CD8-positive, alpha-beta T cell (primary cell): ENCODE measurements at regions of chr1 and their contacts with region 1.

Region 1: GRCh38 chr1:235465066-235465465 is 39.2 kb downstream of the B3GALNT2 start:
- DNase-seq: no peak
- ATAC-seq: no peak
- H3K4me3 ChIP-seq: no peak overlapping the region
- H3K4me3 Mint-ChIP-seq: no peak overlapping the region
- H3K27ac ChIP-seq: no peak overlapping the region
- H3K27ac Mint-ChIP-seq: no peak overlapping the region
- H3K4me1 ChIP-seq: no peaks in the 10 kb centered on the region
- H3K4me1 Mint-ChIP-seq: peaks cover 12% of the 10 kb centered on the region
- H3K27me3 ChIP-seq: no peaks in the 10 kb centered on the region
- H3K27me3 Mint-ChIP-seq: no peaks in the 10 kb centered on the region
- CTCF ChIP-seq: no peak

Region 2: GRCh38 chr1:235430991-235431390 is 34.1 kb before region 1 on chr1:
- CTCF ChIA-PET with region 1: interaction called, 3 read pairs
- POLR2A ChIA-PET with region 1: no interaction called
- intact Hi-C with region 1: loop called in 1 of 2 experiments (anchors 1 kb)
- DNase-seq: no peak
- ATAC-seq: no peak
- H3K4me3 ChIP-seq: no peak overlapping the region
- H3K4me3 Mint-ChIP-seq: no peak overlapping the region
- H3K27ac ChIP-seq: no peak overlapping the region
- H3K27ac Mint-ChIP-seq: no peak overlapping the region
- H3K4me1 ChIP-seq: no peaks in the 10 kb centered on the region
- H3K4me1 Mint-ChIP-seq: peaks cover 2% of the 10 kb centered on the region
- H3K27me3 ChIP-seq: no peaks in the 10 kb centered on the region
- H3K27me3 Mint-ChIP-seq: no peaks in the 10 kb centered on the region
- CTCF ChIP-seq: no peak